Lower leg skin (tissue), 4 donors: ENCODE measurements at regions of chr2 and their contacts with region 1.

Region 1: GRCh38 chr2:241882091-241882625 is 12.6 kb downstream of the RTP5 start:
- DNase-seq: peak; percentile 65 to 92
- H3K4me3 ChIP-seq: peak overlapping the region; percentile 3
- CTCF ChIP-seq: no peak
- POLR2A ChIP-seq: no peak

Region 2: GRCh38 chr2:241508240-241509154 is 373.7 kb before region 1 on chr2 and contains the start of gene STK25:
- intact Hi-C with region 1: loop called (anchors 10 kb)
- DNase-seq: peak; percentile 97 to 99
- H3K4me3 ChIP-seq: peak within 1 kb of the TSS; percentile 89
- CTCF ChIP-seq: no peak
- POLR2A ChIP-seq: no peak
- total RNA-seq, gene STK25: 137 to 315 (median 188) TPM

Region 3: DNA sequence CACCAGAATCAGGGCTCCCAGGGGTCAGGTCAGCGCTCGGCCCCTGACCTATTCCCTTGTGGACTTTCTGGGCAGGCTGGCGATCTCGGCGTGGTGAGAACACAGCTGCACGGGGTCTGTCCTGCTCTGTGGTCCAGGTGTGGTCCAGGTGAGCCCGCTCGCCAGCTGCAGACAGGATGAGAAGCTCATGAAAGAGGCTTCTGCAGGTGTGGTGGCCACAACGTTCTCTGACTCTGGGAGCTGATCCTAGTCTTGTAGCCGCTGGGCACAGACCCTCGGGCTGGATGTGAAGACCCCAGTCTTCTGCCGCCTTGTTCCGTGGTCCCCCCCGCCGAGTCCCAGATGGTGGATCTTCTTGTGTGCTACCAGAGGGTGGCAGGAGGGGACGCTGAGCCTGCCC is 117.0 kb after region 1 on chr2:
- intact Hi-C with region 1: no loop called
- DNase-seq: peak in 1 of 2 donors; percentile 58
- H3K4me3 ChIP-seq: no peak overlapping the region
- CTCF ChIP-seq: no peak
- POLR2A ChIP-seq: no peak